B cell (primary cell): ENCODE measurements at regions of chr11 and their contacts with region 1.

Region 1: GRCh38 chr11:11265994-11266606 is 87.0 kb downstream of the CSNK2A3 start:
- DNase-seq: peak; percentile 44
- ATAC-seq: peak; percentile 44
- H3K4me3 ChIP-seq: no peak overlapping the region
- H3K4me3 Mint-ChIP-seq: no peak overlapping the region
- H3K27ac ChIP-seq: no peak overlapping the region
- H3K27ac Mint-ChIP-seq: no peak overlapping the region
- H3K4me1 ChIP-seq: peaks cover 8 to 9% of the 10 kb centered on the region in 2 donors
- H3K4me1 Mint-ChIP-seq: peaks cover 33% of the 10 kb centered on the region
- H3K27me3 ChIP-seq: peaks cover 0 to 2% (median 0%) of the 10 kb centered on the region in 4 experiments
- H3K27me3 Mint-ChIP-seq: no peaks in the 10 kb centered on the region
- CTCF ChIP-seq: peak; percentile 62

Region 2: GRCh38 chr11:11036848-11037732 is 229.0 kb before region 1 on chr11:
- CTCF ChIA-PET with region 1: interaction called, 4 read pairs
- POLR2A ChIA-PET with region 1: no interaction called
- intact Hi-C with region 1: loop called (anchors 2 kb)
- DNase-seq: peak; percentile 57
- ATAC-seq: peak; percentile 31
- H3K4me3 ChIP-seq: no peak overlapping the region
- H3K4me3 Mint-ChIP-seq: no peak overlapping the region
- H3K27ac ChIP-seq: no peak overlapping the region
- H3K27ac Mint-ChIP-seq: no peak overlapping the region
- H3K4me1 ChIP-seq: no peaks in the 10 kb centered on the region
- H3K4me1 Mint-ChIP-seq: no peaks in the 10 kb centered on the region
- H3K27me3 ChIP-seq: peaks cover 0 to 16% (median 3%) of the 10 kb centered on the region in 4 experiments
- H3K27me3 Mint-ChIP-seq: peaks cover 35% of the 10 kb centered on the region
- CTCF ChIP-seq: peak; percentile 69

Region 3: DNA sequence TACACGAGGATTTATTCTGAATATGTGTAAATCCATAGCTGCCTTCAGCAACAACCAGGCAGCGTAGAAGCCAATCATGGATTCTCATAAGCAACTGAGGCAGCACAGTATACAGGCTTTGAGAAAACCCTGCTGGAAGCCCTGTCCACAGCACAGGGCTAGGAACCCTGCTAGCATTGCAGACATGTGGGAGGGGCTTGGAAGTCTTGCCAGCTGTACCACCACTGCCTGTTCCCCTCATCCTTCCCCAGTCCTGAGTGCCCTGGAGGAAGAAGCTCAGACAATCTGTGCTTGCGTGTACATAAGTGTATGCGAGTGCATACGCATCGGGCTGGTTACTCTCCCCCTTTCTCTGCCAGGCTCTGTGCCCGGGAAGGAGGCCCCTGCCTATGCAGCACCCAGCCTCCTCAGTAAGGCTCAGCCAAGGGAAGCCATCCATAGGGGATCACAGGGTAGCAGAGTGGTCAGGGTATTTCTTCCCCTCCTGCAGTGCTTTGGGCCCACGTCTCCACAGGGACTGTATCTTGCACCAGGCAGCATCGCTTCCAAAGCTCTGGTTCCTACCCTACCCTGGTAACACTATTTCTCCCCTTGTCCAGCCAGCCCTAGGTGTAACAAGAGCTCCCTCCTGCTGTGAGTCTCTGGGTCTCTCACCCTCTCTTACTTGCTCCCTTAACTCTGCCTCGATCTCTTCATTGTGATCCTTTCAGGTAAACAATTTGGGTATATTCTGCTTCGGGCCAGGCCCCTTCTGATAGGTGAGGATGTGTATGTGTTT is 265.2 kb after region 1 on chr11:
- CTCF ChIA-PET with region 1: no interaction called
- POLR2A ChIA-PET with region 1: no interaction called
- intact Hi-C with region 1: no loop called
- DNase-seq: no peak
- ATAC-seq: no peak
- H3K4me3 ChIP-seq: no peak overlapping the region
- H3K4me3 Mint-ChIP-seq: no peak overlapping the region
- H3K27ac ChIP-seq: no peak overlapping the region
- H3K27ac Mint-ChIP-seq: no peak overlapping the region
- H3K4me1 ChIP-seq: no peaks in the 10 kb centered on the region
- H3K4me1 Mint-ChIP-seq: no peaks in the 10 kb centered on the region
- H3K27me3 ChIP-seq: no peaks in the 10 kb centered on the region
- H3K27me3 Mint-ChIP-seq: no peaks in the 10 kb centered on the region
- CTCF ChIP-seq: no peak